Activated naive CD4-positive, alpha-beta T cell treated with anti-CD3 and anti-CD28 coated beads for 36 hours (primary cell): ENCODE measurements at regions of chr12 and their contacts with region 1.

Region 1: GRCh38 chr12:53321074-53321814 is at the start of gene AAAS:
- DNase-seq: peak; percentile 98
- H3K4me3 Mint-ChIP-seq: peak within 1 kb of the TSS; percentile 91
- H3K27ac Mint-ChIP-seq: peak within 1 kb of the TSS; percentile 97
- H3K4me1 Mint-ChIP-seq: peaks cover 38% of the 10 kb centered on the region
- H3K27me3 Mint-ChIP-seq: no peaks in the 10 kb centered on the region
- total RNA-seq, gene AAAS: 81.0 to 83.4 TPM

Region 2: DNA sequence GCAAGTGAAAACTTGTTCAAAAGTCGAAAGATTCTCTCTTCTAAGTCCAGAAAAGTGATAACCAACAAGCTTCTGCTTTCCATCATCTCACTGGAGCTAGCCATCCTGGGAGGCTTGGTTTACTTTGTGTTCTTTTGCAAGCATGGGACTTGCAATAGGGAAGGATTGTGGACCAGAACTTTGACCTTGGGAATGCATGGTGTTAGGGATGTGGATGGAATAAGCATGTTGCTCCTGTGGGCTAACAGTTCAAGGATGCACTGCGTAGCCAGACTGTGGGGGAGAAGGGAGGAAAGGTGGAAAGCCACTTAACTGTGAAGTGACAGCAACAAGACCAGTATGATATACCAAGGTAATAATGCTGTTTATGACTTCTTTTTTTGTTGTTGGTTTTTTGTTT is 189.4 kb before region 1 on chr12:
- CTCF ChIA-PET with region 1: no interaction called
- intact Hi-C with region 1: no loop called
- DNase-seq: no peak
- H3K4me3 Mint-ChIP-seq: no peak overlapping the region
- H3K27ac Mint-ChIP-seq: no peak overlapping the region
- H3K4me1 Mint-ChIP-seq: no peaks in the 10 kb centered on the region
- H3K27me3 Mint-ChIP-seq: no peaks in the 10 kb centered on the region

Region 3: GRCh38 chr12:53220801-53221202 is 100.4 kb before region 1 on chr12:
- CTCF ChIA-PET with region 1: interaction called, 175 read pairs
- intact Hi-C with region 1: no loop called
- DNase-seq: peak; percentile 80
- H3K4me3 Mint-ChIP-seq: peak overlapping the region; percentile 90
- H3K27ac Mint-ChIP-seq: peak overlapping the region; percentile 92
- H3K4me1 Mint-ChIP-seq: peaks cover 72% of the 10 kb centered on the region
- H3K27me3 Mint-ChIP-seq: no peaks in the 10 kb centered on the region

Region 4: GRCh38 chr12:53302903-53303302 is 18.3 kb before region 1 on chr12:
- CTCF ChIA-PET with region 1: interaction called, 39 read pairs
- intact Hi-C with region 1: loop called (anchors 1 kb)
- DNase-seq: no peak
- H3K4me3 Mint-ChIP-seq: peak overlapping the region; percentile 0
- H3K27ac Mint-ChIP-seq: peak overlapping the region; percentile 25
- H3K4me1 Mint-ChIP-seq: peaks cover 48% of the 10 kb centered on the region
- H3K27me3 Mint-ChIP-seq: no peaks in the 10 kb centered on the region

Region 5: GRCh38 chr12:53379389-53380103 is 58.3 kb after region 1 on chr12:
- CTCF ChIA-PET with region 1: interaction called, 13 read pairs
- intact Hi-C with region 1: loop called (anchors 1 kb)
- DNase-seq: peak; percentile 99
- H3K4me3 Mint-ChIP-seq: no peak overlapping the region
- H3K27ac Mint-ChIP-seq: no peak overlapping the region
- H3K4me1 Mint-ChIP-seq: peaks cover 48% of the 10 kb centered on the region
- H3K27me3 Mint-ChIP-seq: no peaks in the 10 kb centered on the region

Region 6: GRCh38 chr12:53500776-53501614 is 179.8 kb after region 1 on chr12 and contains the start of gene TARBP2:
- CTCF ChIA-PET with region 1: interaction called, 7 read pairs
- intact Hi-C with region 1: loop called (anchors 1 kb)
- DNase-seq: peak; percentile 97
- H3K4me3 Mint-ChIP-seq: peak within 1 kb of the TSS; percentile 81
- H3K27ac Mint-ChIP-seq: peak within 1 kb of the TSS; percentile 96
- H3K4me1 Mint-ChIP-seq: peaks cover 41% of the 10 kb centered on the region
- H3K27me3 Mint-ChIP-seq: no peaks in the 10 kb centered on the region
- total RNA-seq, gene TARBP2: 25.0 to 26.8 TPM

Region 7: GRCh38 chr12:54984658-54985376 is 1663.6 kb after region 1 on chr12 and contains the start of gene TESPA1:
- CTCF ChIA-PET with region 1: no interaction called
- intact Hi-C with region 1: loop called (anchors 10 kb)
- DNase-seq: peak; percentile 94
- H3K4me3 Mint-ChIP-seq: peak within 1 kb of the TSS; percentile 75
- H3K27ac Mint-ChIP-seq: peak within 1 kb of the TSS; percentile 89
- H3K4me1 Mint-ChIP-seq: peaks cover 56% of the 10 kb centered on the region
- H3K27me3 Mint-ChIP-seq: no peaks in the 10 kb centered on the region
- total RNA-seq, gene TESPA1: 43.9 to 45.1 TPM